ENCODE measurements at regions of chr2 and their contacts with region 1.

Region 1: DNA sequence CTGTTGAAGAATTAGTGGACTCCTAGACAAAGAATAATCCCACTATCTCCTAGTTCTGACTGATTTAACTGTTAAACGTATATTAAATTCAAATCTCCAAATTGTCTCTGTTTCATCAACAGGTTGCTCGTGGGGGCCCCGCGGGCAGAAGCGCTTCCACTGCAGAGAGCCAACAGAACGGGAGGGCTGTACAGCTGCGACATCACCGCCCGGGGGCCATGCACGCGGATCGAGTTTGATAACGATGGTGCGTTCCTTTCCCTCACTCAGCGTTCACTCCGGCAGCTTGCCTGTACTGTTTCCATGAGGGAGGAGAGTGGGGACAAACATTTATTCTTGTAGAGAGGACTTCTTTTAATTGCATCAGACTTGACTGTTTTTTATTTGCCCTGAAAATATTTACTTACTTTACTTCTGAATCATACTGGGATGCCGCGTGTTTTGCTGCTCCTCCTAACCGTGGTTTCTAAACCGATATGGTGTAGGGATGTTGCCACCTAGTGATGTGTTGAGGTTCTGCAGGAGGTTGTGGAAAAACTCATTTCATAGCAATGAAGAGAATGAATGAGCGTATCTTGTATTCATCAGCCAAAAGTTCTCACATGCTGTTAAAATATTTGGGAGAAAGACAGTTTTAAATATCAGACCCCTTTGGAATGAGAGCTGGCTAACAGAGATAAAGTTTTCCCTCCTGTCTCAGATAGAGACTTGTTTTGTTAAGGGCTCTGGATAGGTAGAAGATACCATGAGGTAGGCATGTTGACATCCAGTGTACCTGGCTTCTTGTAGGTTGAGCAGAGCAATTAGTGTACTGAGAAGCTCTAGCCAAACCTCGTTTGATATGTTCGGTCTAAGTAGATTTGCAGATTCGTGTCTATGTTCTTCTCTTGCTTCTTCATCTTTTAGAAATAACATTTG is 38.3 kb downstream of the ITGA6 start:
- DNase-seq: peak; percentile 89
- ATAC-seq: peak; percentile 91
- H3K4me3 ChIP-seq: peak overlapping the region; percentile 46
- H3K27ac ChIP-seq: peak overlapping the region; percentile 44
- H3K4me1 ChIP-seq: peaks cover 6% of the 10 kb centered on the region
- H3K27me3 ChIP-seq: no peaks in the 10 kb centered on the region
- CTCF ChIP-seq: peak; percentile 95
- POLR2A ChIP-seq: 0 out of 2 replicates have a peak, but pooled peaks have one; percentile 39
- RAD21 ChIP-seq: peak; percentile 97

Region 2: DNA sequence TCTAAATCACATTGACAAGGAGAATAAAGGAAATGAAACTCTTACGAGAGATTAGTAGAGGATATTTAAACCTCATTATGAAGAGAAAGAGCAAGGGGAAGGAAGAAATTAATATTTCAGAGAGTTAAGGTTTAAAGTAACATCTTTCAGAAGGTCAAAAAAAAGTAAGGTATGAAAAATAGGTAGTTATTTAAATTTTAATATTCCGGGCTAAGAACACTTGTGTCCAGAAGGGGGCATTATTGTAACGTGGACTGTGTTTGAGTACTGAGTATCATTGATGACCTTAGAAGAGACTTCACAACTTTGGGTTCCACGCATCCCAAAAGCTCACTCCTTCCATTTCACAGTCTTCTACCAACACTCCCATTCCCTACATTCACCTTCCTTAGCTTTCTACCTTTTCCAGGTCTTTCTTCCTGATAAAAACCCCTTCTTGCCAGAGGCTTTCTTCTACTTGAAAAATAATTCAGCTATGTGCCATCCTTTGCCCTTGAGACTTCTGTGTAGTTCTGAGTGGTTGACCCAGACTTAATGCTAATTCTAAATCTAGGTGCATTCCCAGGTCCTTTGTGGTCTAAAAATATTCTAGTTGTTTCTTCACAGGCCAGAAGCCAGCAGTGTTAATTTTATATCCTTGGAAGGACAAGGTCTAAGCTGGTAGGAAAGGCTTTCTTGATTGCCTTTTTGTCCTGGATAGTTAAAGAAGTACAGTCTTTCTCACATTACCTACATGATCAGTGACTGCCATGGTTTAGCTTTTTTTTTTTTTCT is 761.9 kb before region 1 on chr2:
- CTCF ChIA-PET with region 1: interaction called, 3 read pairs
- POLR2A ChIA-PET with region 1: no interaction called
- dilution Hi-C with region 1: no loop called
- in situ Hi-C with region 1: loop called (anchors 25 kb)
- intact Hi-C with region 1: loop called (anchors 5 kb)
- DNase-seq: peak; percentile 56
- ATAC-seq: peak; percentile 68
- H3K4me3 ChIP-seq: no peak overlapping the region
- H3K27ac ChIP-seq: no peak overlapping the region
- H3K4me1 ChIP-seq: peaks cover 5% of the 10 kb centered on the region
- H3K27me3 ChIP-seq: no peaks in the 10 kb centered on the region
- CTCF ChIP-seq: peak; percentile 66
- POLR2A ChIP-seq: no peak
- RAD21 ChIP-seq: peak; percentile 72

Region 3: GRCh38 chr2:172119089-172119488 is 346.6 kb before region 1 on chr2:
- CTCF ChIA-PET with region 1: no interaction called
- POLR2A ChIA-PET with region 1: interaction called, 10 read pairs
- dilution Hi-C with region 1: no loop called
- in situ Hi-C with region 1: no loop called
- intact Hi-C with region 1: no loop called
- DNase-seq: peak; percentile 82
- ATAC-seq: peak; percentile 69
- H3K4me3 ChIP-seq: no peak overlapping the region
- H3K27ac ChIP-seq: no peak overlapping the region
- H3K4me1 ChIP-seq: peaks cover 5% of the 10 kb centered on the region; the same call in 1 of the 2 replicates
- H3K27me3 ChIP-seq: no peaks in the 10 kb centered on the region
- CTCF ChIP-seq: no peak
- POLR2A ChIP-seq: no peak
- RAD21 ChIP-seq: no peak

Region 4: DNA sequence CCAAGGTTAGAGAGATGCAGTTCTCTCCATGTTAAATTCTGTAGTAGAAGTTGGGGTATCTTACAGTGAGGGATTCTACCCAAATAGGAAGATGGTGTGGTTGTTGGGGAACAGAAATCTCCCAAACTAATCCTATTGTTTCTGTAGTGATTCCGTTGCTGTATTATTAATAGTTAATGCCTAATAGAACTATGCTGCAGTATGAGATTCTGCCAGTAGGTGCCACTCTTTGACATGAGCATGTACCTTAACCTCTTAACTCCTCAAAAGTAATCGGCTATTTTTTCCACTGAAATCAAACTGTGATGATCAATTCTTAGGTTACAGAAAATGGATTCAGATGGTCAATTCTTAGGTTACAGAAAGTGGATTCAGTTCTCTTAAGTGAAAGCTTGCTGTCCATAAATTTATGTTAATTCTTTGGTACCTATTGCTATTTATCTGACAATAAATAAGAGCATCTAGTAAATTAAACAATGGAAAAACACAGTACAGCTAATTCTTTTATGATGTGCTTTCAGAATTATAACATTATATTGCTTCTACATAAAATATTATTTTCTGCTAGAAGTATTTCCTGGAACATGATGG is 265.1 kb before region 1 on chr2:
- CTCF ChIA-PET with region 1: interaction called, 8 read pairs
- POLR2A ChIA-PET with region 1: no interaction called
- dilution Hi-C with region 1: no loop called
- in situ Hi-C with region 1: no loop called
- intact Hi-C with region 1: loop called (anchors 1 kb)
- DNase-seq: peak; percentile 59
- ATAC-seq: peak; percentile 65
- H3K4me3 ChIP-seq: no peak overlapping the region
- H3K27ac ChIP-seq: no peak overlapping the region
- H3K4me1 ChIP-seq: peaks cover 3% of the 10 kb centered on the region; the same call in 1 of the 2 replicates
- H3K27me3 ChIP-seq: no peaks in the 10 kb centered on the region
- CTCF ChIP-seq: peak; percentile 66
- POLR2A ChIP-seq: no peak
- RAD21 ChIP-seq: peak; percentile 70

Region 5: GRCh38 chr2:172427990-172428831 is 37.5 kb before region 1 on chr2:
- CTCF ChIA-PET with region 1: interaction called, 8 read pairs
- POLR2A ChIA-PET with region 1: no interaction called
- dilution Hi-C with region 1: no loop called
- in situ Hi-C with region 1: no loop called
- intact Hi-C with region 1: loop called (anchors 2 kb)
- DNase-seq: no peak
- ATAC-seq: peak; percentile 75
- H3K4me3 ChIP-seq: peak overlapping the region; percentile 82
- H3K27ac ChIP-seq: peak overlapping the region; percentile 17; the same call in 1 of the 2 replicates
- H3K4me1 ChIP-seq: peaks cover 7% of the 10 kb centered on the region
- H3K27me3 ChIP-seq: peaks cover 5% of the 10 kb centered on the region; the same call in 1 of the 2 replicates
- CTCF ChIP-seq: 0 out of 2 replicates have a peak, but pooled peaks have one; percentile 9
- POLR2A ChIP-seq: no peak
- RAD21 ChIP-seq: no peak

Region 6: DNA sequence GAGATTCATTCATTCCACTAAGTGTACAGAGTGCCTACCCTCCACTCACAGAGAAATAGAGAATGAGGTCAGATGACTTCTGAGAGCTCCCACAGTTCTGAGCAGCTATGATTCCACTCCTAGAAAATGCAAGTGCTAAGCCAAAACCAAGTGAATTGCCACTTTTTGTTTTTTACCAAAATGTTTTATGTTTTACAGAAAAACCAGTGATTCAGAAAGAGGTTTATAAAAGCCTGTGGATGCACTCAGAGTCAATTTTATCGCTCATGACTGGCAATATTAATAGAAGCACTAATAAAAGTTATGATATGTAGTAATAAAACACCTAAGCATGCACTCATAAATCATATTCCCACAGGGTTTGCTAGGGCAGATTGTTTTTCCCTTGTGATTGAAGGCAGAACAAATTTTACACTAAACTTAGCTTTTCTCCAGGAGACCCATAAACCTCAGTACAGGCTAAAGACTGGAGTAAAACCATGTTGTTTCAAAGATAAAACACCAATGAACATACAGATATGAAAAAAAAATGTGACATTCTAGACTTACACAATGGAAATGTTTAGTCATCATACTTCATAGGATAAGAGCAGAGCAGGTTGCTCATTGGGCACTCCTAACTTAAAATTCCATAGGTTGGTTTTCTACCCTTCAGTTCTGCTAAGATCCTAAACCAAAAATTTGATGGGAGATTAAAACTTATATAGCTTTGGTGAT is 157.7 kb after region 1 on chr2:
- CTCF ChIA-PET with region 1: no interaction called
- POLR2A ChIA-PET with region 1: no interaction called
- dilution Hi-C with region 1: no loop called
- in situ Hi-C with region 1: no loop called
- intact Hi-C with region 1: no loop called
- DNase-seq: peak; percentile 89
- ATAC-seq: peak; percentile 96
- H3K4me3 ChIP-seq: no peak overlapping the region
- H3K27ac ChIP-seq: no peak overlapping the region
- H3K4me1 ChIP-seq: peaks cover 2% of the 10 kb centered on the region; the same call in 1 of the 2 replicates
- H3K27me3 ChIP-seq: no peaks in the 10 kb centered on the region
- CTCF ChIP-seq: no peak
- POLR2A ChIP-seq: no peak
- RAD21 ChIP-seq: no peak

Region 7: GRCh38 chr2:173017646-173018420 is 552.2 kb after region 1 on chr2:
- CTCF ChIA-PET with region 1: no interaction called
- POLR2A ChIA-PET with region 1: no interaction called
- dilution Hi-C with region 1: no loop called
- in situ Hi-C with region 1: no loop called
- intact Hi-C with region 1: no loop called
- DNase-seq: no peak
- ATAC-seq: no peak
- H3K4me3 ChIP-seq: no peak overlapping the region
- H3K27ac ChIP-seq: no peak overlapping the region
- H3K4me1 ChIP-seq: no peaks in the 10 kb centered on the region
- H3K27me3 ChIP-seq: no peaks in the 10 kb centered on the region
- CTCF ChIP-seq: no peak
- POLR2A ChIP-seq: no peak
- RAD21 ChIP-seq: no peak